ENCODE measurements at regions of chr7 and their contacts with region 1.

Region 1: GRCh38 chr7:22854158-22855048 is 31.8 kb upstream of the TOMM7 start:
- DNase-seq: peak; percentile 82
- H3K4me3 ChIP-seq: peak overlapping the region; percentile 68
- H3K27ac ChIP-seq: peak overlapping the region; percentile 85
- H3K4me1 ChIP-seq: peaks cover 3% of the 10 kb centered on the region
- H3K27me3 ChIP-seq: no peaks in the 10 kb centered on the region
- CTCF ChIP-seq: peak; percentile 81

Region 2: DNA sequence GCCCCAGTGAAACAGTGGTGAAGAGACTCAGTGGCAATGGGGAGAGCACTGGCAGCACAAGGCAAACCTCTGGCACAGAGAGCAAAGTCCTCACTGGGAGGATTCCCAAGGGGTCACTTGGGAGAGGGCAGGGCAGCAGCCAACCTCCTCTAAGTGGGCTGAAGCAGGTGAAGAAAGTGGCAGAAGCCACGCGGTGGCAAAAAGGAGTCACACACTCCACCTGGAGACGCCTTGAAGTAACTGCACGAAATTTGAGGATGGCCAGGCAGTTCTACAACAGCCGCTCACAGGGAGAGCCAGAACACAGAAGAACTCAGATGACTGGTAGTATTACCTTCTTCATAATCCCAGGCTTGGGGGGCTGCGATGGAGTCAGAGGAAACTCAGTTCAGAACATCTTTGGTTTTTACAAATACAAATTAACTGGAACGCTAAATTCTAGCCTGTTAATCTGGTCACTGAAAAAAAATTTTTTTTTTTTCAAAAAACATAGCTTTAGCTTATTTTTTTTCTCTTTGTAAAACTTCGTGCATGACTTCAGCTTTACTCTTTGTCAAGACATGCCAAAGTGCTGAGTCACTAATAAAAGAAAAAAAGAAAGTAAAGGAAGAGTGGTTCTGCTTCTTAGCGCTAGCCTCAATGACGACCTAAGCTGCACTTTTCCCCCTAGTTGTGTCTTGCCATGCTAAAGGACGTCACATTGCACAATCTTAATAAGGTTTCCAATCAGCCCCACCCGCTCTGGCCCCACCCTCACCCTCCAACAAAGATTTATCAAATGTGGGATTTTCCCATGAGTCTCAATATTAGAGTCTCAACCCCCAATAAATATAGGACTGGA is 127.8 kb before region 1 on chr7:
- intact Hi-C with region 1: no loop called
- DNase-seq: no peak
- H3K4me3 ChIP-seq: no peak overlapping the region
- H3K27ac ChIP-seq: peak overlapping the region; percentile 13
- H3K4me1 ChIP-seq: no peaks in the 10 kb centered on the region
- H3K27me3 ChIP-seq: peaks cover 5% of the 10 kb centered on the region
- CTCF ChIP-seq: peak; percentile 30

Region 3: GRCh38 chr7:23055582-23056178 is 201.3 kb after region 1 on chr7:
- intact Hi-C with region 1: loop called (anchors 10 kb)
- DNase-seq: peak; percentile 55
- H3K4me3 ChIP-seq: no peak overlapping the region
- H3K27ac ChIP-seq: no peak overlapping the region
- H3K4me1 ChIP-seq: no peaks in the 10 kb centered on the region
- H3K27me3 ChIP-seq: no peaks in the 10 kb centered on the region
- CTCF ChIP-seq: peak; percentile 85

Region 4: DNA sequence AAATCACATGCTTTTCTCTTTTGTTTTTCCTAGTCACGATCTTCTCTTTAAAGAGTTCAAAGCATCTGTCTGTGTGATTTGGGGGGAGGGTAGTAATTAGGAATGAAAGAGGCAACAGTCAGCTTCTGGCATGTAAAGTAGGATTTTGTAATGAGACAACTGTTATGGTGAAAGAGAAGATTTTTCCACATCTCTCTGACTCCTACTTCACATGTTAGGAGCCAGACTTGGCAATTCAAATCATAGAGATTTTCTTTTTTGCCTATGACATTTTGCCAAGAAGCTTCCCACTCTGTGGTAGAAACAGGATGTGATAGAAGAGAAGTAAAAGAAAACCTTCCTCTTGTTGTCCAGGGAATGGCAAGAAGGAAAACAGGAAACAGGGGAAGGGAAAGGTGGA is 212.9 kb after region 1 on chr7:
- intact Hi-C with region 1: no loop called
- DNase-seq: no peak
- H3K4me3 ChIP-seq: no peak overlapping the region
- H3K27ac ChIP-seq: no peak overlapping the region
- H3K4me1 ChIP-seq: no peaks in the 10 kb centered on the region
- H3K27me3 ChIP-seq: peaks cover 4% of the 10 kb centered on the region
- CTCF ChIP-seq: no peak

Measured in colonic mucosa (tissue), 4 donors.